ENCODE measurements at regions of chr12 and their contacts with region 1.

Region 1: DNA sequence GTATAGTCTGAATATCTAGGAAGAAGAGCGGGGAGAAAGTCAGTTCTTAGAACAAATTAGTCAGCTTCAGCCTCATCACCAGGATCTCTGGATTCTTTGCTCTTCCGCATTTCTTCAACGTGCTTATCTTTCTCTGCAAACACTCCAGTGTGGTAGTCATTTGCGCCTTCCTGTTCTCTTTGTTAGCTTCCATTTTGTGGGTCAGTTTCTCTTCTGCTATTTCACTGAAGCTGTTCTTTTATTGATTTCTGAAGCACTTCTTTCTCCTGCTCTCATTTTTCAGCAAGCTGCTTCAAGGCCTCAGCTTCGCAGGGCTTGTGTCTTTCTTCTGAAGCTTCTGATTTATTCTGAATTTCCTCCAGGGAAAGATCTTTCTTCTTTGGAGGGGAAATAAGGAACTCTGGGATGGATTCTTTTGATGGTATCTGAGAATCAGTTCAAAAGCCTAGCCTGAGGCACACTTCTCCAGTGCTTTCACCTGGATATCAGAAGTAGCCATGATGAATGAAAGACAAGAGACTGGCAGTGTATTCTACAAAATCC is 13.5 kb downstream of the AMN1 start:
- DNase-seq: no peak

Region 2: DNA sequence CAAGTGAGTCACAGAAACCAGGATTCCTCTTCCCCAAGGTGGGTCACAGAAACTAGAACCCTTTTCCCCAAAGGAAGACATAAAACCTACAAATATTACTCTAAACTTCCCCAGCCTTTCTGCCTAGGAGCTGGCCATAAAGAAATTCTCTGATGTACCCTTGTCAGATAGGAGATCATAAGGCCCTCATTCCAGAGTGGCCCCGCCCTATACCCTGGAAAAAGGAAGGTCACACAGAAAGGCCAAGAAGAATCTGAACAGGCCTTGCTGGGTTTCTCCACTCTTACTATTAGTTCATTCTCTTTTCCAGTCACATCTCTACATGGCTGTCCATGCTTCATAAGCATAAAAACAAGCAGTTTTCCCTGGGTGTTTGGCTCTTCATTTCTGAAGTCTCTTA is 37.6 kb before region 1 on chr12:
- intact Hi-C with region 1: loop called in 1 of 2 experiments (anchors 5 kb)
- DNase-seq: no peak